ENCODE measurements at regions of chr2 and their contacts with region 1.

Region 1: GRCh38 chr2:34096562-34097171 is 497.6 kb upstream of the FAM98A start:
- DNase-seq: peak in 1 of 2 donors; percentile 26
- H3K4me3 ChIP-seq: no peak overlapping the region
- CTCF ChIP-seq: no peak
- POLR2A ChIP-seq: no peak

Region 2: DNA sequence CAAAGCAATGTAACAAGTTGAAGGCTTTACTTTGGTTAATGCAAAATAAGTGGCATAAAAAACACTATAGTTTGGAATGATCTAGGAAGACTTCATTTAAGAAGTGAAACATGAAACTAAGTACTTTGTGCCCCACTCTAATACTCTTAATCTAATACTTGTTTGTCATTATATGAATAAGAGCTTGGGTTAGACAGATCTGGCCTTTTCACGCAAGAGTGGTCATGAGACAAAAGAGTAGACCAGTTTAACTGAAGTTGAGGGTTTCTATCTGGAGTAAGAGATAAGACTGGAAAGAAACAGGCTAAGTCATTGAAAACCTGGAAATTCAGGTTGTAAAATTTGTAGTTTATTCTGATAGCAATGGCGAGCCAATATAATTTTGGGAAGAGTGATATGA is 1928.2 kb before region 1 on chr2:
- intact Hi-C with region 1: no loop called
- DNase-seq: no peak
- H3K4me3 ChIP-seq: no peak overlapping the region
- CTCF ChIP-seq: no peak
- POLR2A ChIP-seq: no peak

Region 3: GRCh38 chr2:35410431-35411061 is 1313.9 kb after region 1 on chr2:
- intact Hi-C with region 1: loop called (anchors 10 kb)
- DNase-seq: no peak
- H3K4me3 ChIP-seq: no peak overlapping the region
- CTCF ChIP-seq: no peak
- POLR2A ChIP-seq: no peak